Sigmoid colon (tissue), 7 donors: ENCODE measurements at regions of chr3 and their contacts with region 1.

Region 1: GRCh38 chr3:66816090-66816761 is 181.9 kb upstream of the KBTBD8 start:
- DNase-seq: no peak
- H3K4me3 ChIP-seq: no peak overlapping the region
- H3K27ac ChIP-seq: peak overlapping the region in 2 of 4 donors; percentile 15 to 29
- H3K4me1 ChIP-seq: peaks cover 0 to 36% (median 19%) of the 10 kb centered on the region in 4 donors
- H3K27me3 ChIP-seq: no peaks in the 10 kb centered on the region
- CTCF ChIP-seq: peak; percentile 41 to 61 (median 57)
- EP300 ChIP-seq: no peak
- POLR2A ChIP-seq: no peak

Region 2: GRCh38 chr3:66253790-66254620 is 562.2 kb before region 1 on chr3:
- intact Hi-C with region 1: loop called (anchors 5 kb)
- DNase-seq: no peak
- H3K4me3 ChIP-seq: no peak overlapping the region
- H3K27ac ChIP-seq: no peak overlapping the region
- H3K4me1 ChIP-seq: no peaks in the 10 kb centered on the region
- H3K27me3 ChIP-seq: no peaks in the 10 kb centered on the region
- CTCF ChIP-seq: peak; percentile 52 to 82 (median 80)
- EP300 ChIP-seq: no peak
- POLR2A ChIP-seq: no peak

Region 3: DNA sequence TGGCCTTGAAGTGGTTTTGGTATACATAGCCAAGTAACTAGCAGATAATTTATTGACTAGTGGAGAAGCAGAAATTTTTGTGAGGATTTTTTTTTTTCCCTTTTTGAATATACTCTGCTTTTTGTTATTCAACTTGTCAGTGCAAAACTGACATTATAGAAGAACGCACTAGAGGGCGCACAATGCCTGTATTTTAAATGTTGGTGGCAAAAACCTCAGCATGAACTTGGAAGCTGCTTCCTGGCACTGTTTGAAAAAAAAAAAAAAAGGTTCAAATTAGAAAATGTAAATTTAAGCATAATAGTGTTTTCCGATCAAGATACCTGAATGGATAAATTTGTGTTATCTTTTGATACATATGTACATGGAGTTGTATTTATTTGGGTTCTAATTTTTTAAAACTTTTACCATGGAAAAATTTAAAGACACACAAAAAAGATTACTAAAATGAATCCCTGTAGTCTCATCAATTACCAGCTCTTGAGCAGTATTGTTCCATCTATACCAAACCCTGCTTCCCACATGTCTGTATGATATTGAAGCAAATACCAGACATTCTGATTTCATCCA is 539.4 kb before region 1 on chr3:
- intact Hi-C with region 1: loop called (anchors 2 kb)
- DNase-seq: peak; percentile 75
- H3K4me3 ChIP-seq: no peak overlapping the region
- H3K27ac ChIP-seq: peak overlapping the region in 3 of 4 donors; percentile 32 to 59 (median 58)
- H3K4me1 ChIP-seq: peaks cover 0 to 32% (median 10%) of the 10 kb centered on the region in 4 donors
- H3K27me3 ChIP-seq: no peaks in the 10 kb centered on the region
- CTCF ChIP-seq: peak; percentile 55 to 61 (median 58)
- EP300 ChIP-seq: no peak
- POLR2A ChIP-seq: no peak

Region 4: DNA sequence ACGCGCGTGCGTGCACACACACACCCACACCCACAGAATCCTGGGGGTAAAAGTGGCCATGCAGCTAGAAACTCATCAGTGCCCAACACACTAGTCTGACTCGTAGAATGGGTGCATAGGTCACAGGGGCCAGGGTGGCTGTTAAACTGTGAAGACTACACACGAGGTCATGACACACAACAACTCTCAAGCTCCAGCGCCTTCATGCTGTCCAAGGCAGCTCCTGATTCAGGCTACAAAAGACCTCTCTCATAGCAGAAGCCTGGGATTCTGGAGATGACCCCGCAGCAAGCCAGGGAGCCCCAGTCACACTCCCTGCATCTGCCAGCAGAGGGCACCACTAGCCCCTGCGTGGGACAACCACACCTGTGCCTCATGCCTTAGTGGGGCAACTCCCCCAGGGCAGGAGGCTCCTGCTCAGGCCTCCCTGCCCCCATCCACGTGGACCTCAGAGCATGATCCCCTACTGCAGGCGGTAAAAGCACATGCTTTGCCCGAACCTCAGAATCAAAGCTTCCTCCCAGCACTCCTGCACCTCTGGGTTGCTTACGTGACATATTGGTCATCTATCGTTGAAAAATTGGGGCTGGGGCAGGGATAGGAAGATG is 408.5 kb before region 1 on chr3:
- intact Hi-C with region 1: loop called (anchors 5 kb)
- DNase-seq: peak; percentile 86
- H3K4me3 ChIP-seq: no peak overlapping the region
- H3K27ac ChIP-seq: peak overlapping the region; percentile 73 to 95 (median 86)
- H3K4me1 ChIP-seq: peaks cover 0 to 100% (median 99%) of the 10 kb centered on the region in 4 donors
- H3K27me3 ChIP-seq: no peaks in the 10 kb centered on the region
- CTCF ChIP-seq: peak; percentile 68 to 90 (median 86)
- EP300 ChIP-seq: no peak
- POLR2A ChIP-seq: no peak

Region 5: DNA sequence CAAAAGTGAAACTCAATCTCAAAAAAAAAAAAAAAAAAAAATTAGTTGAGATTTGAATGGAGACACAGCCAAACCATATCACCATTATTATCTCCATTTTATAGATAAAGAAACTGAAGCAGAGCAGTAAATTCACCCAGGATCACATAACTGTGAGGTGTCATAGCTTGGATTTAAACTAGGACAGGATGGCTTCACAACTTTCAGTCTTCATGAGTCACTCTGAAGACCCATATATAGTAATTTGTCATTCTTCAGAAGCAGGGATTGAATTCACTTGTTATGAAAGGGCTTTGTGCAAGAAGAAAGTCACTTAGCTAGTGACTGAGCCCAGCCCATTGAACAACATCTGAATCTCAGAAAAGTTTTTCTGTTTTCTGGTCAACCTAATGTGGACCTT is 254.9 kb before region 1 on chr3:
- intact Hi-C with region 1: loop called (anchors 5 kb)
- DNase-seq: no peak
- H3K4me3 ChIP-seq: no peak overlapping the region
- H3K27ac ChIP-seq: peak overlapping the region in 2 of 4 donors; percentile 79 to 82
- H3K4me1 ChIP-seq: peaks cover 2 to 50% (median 42%) of the 10 kb centered on the region in 4 donors
- H3K27me3 ChIP-seq: no peaks in the 10 kb centered on the region
- CTCF ChIP-seq: no peak
- EP300 ChIP-seq: no peak
- POLR2A ChIP-seq: no peak

Region 6: GRCh38 chr3:66703501-66703900 is 112.7 kb before region 1 on chr3:
- intact Hi-C with region 1: loop called (anchors 5 kb)
- DNase-seq: no peak
- H3K4me3 ChIP-seq: no peak overlapping the region
- H3K27ac ChIP-seq: peak overlapping the region in 3 of 4 donors; percentile 68 to 83 (median 80)
- H3K4me1 ChIP-seq: peaks cover 0 to 59% (median 53%) of the 10 kb centered on the region in 4 donors
- H3K27me3 ChIP-seq: no peaks in the 10 kb centered on the region
- CTCF ChIP-seq: no peak
- EP300 ChIP-seq: no peak
- POLR2A ChIP-seq: no peak